Naive thymus-derived CD8-positive, alpha-beta T cell (primary cell): ENCODE measurements at regions of chr2 and their contacts with region 1.

Region 1: GRCh38 chr2:131040661-131041401 is 52.4 kb downstream of the FAM168B start:
- DNase-seq: peak in 8 of 10 donors; percentile 14 to 70 (median 40)
- ATAC-seq: peak; percentile 46 to 50
- H3K4me3 Mint-ChIP-seq: peak overlapping the region; percentile 90 to 99 (median 94)
- H3K27ac Mint-ChIP-seq: peak overlapping the region; percentile 76 to 98 (median 95)
- H3K4me1 Mint-ChIP-seq: peaks cover 22 to 70% (median 53%) of the 10 kb centered on the region in 4 donors
- H3K27me3 Mint-ChIP-seq: no peaks in the 10 kb centered on the region

Region 2: GRCh38 chr2:131010566-131010965 is 30.3 kb before region 1 on chr2:
- POLR2A ChIA-PET with region 1: interaction called, 23 read pairs
- DNase-seq: peak in 6 of 10 donors; percentile 21 to 81 (median 64)
- ATAC-seq: peak; percentile 84 to 95
- H3K4me3 Mint-ChIP-seq: peak overlapping the region; percentile 40 to 82 (median 76)
- H3K27ac Mint-ChIP-seq: peak overlapping the region; percentile 34 to 92 (median 82)
- H3K4me1 Mint-ChIP-seq: peaks cover 26 to 40% (median 37%) of the 10 kb centered on the region in 4 donors
- H3K27me3 Mint-ChIP-seq: peaks cover 0 to 4% (median 0%) of the 10 kb centered on the region in 5 donors

Region 3: GRCh38 chr2:131093006-131093695 is 52.3 kb after region 1 on chr2 and contains the start of gene FAM168B:
- POLR2A ChIA-PET with region 1: interaction called, 54 read pairs
- DNase-seq: peak; percentile 82 to 93 (median 90)
- ATAC-seq: peak; percentile 85 to 86
- H3K4me3 Mint-ChIP-seq: peak within 1 kb of the TSS; percentile 88 to 98 (median 94)
- H3K27ac Mint-ChIP-seq: peak within 1 kb of the TSS; percentile 90 to 98 (median 96)
- H3K4me1 Mint-ChIP-seq: peaks cover 5 to 34% (median 18%) of the 10 kb centered on the region in 4 donors
- H3K27me3 Mint-ChIP-seq: no peaks in the 10 kb centered on the region
- polyA plus RNA-seq, gene FAM168B: 29.9 to 43.8 (median 35.8) TPM

Region 4: DNA sequence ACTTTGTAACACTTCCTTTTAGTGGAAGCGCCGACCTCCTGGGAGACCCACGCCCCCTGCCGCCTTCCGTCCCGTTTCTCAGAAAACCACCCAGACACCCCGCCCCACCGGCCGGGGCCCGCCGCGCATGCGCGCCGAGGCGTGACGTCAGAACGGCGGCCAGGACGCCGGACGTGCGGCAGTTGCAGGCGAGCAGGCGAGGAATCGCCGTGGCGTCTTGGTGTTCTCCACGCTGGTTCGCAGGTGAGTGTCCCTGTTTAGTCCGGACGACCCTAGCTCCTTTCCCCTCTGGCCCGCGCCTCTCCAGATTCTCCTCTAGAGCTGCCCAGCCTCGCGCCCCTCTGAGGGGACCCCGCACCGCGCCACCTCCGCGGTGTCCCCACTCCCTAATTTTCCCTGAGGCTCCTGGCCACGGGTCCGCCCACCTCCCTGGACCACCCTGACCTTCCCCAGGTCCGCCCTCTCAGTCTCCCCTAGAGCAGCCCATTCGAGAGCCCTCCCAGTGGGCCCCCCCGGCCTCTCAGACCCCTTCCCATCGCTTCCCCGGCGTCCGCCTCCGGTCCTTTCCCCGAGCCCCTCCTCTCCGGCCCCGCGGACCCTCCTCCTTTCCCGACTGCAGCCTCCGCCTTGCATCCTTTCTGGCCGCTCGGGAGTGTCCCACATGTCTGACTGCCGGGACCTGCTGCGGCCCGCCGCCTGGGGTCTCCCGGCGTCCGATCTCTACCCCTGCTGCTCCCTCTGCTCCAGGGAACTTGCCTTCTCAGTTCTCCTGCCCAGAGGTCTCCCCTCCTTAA is 64.5 kb after region 1 on chr2 and contains the start of gene PLEKHB2:
- POLR2A ChIA-PET with region 1: interaction called, 18 read pairs
- DNase-seq: peak; percentile 87 to 97 (median 93)
- ATAC-seq: peak; percentile 72 to 74
- H3K4me3 Mint-ChIP-seq: peak within 1 kb of the TSS; percentile 88 to 100 (median 96)
- H3K27ac Mint-ChIP-seq: peak within 1 kb of the TSS; percentile 88 to 99 (median 97)
- H3K4me1 Mint-ChIP-seq: peaks cover 21 to 60% (median 56%) of the 10 kb centered on the region in 4 donors
- H3K27me3 Mint-ChIP-seq: no peaks in the 10 kb centered on the region
- polyA plus RNA-seq, gene PLEKHB2: 63.0 to 70.7 (median 65.7) TPM

Region 5: DNA sequence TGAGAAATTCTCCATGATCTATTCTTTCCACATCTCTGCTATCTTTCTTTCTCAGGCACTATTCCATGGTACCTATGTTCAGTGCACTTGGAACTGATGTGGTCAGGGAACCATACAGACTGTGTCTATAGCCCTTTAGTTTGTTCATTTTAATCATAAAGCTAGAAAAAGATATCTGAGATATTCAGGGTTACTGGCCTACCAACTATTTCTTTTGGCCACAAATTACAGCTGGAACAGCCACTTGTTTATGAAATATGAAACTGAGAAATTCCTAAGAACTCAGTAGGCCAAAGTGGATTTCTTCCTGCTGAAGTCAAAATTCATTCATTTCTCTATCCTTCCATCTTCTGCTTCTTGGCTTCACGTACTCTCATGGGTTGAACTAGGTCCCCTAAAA is 1652.0 kb after region 1 on chr2:
- POLR2A ChIA-PET with region 1: no interaction called
- DNase-seq: no peak
- ATAC-seq: no peak
- H3K4me3 Mint-ChIP-seq: no peak overlapping the region
- H3K27ac Mint-ChIP-seq: no peak overlapping the region
- H3K4me1 Mint-ChIP-seq: peaks cover 0 to 1% (median 0%) of the 10 kb centered on the region in 4 donors
- H3K27me3 Mint-ChIP-seq: peaks cover 0 to 23% (median 2%) of the 10 kb centered on the region in 5 donors